Panc1 (cell line): ENCODE measurements at regions of chr12 and their contacts with region 1.

Region 1: GRCh38 chr12:121334513-121335343 is 17.5 kb downstream of the ANAPC5 start:
- DNase-seq: no peak
- ATAC-seq: peak; percentile 95
- H3K4me3 ChIP-seq: no peak overlapping the region
- H3K27ac ChIP-seq: no peak overlapping the region
- H3K4me1 ChIP-seq: no peaks in the 10 kb centered on the region
- H3K27me3 ChIP-seq: no peaks in the 10 kb centered on the region
- CTCF ChIP-seq: peak; percentile 85

Region 2: GRCh38 chr12:120725659-120726509 is 608.8 kb before region 1 on chr12 and contains the start of gene ACADS:
- CTCF ChIA-PET with region 1: no interaction called
- POLR2A ChIA-PET with region 1: no interaction called
- in situ Hi-C with region 1: no loop called
- intact Hi-C with region 1: no loop called
- DNase-seq: peak; percentile 22
- ATAC-seq: peak; percentile 99
- H3K4me3 ChIP-seq: peak within 1 kb of the TSS; percentile 71 to 82
- H3K27ac ChIP-seq: peak within 1 kb of the TSS; percentile 90
- H3K4me1 ChIP-seq: peaks cover 8% of the 10 kb centered on the region
- H3K27me3 ChIP-seq: no peaks in the 10 kb centered on the region
- CTCF ChIP-seq: no peak
- total RNA-seq, gene ACADS: 15.9 TPM

Region 3: GRCh38 chr12:120978296-120979219 is 356.2 kb before region 1 on chr12 and contains the start of gene HNF1A:
- CTCF ChIA-PET with region 1: no interaction called
- POLR2A ChIA-PET with region 1: interaction called, 11 read pairs
- in situ Hi-C with region 1: no loop called
- intact Hi-C with region 1: no loop called
- DNase-seq: no peak
- ATAC-seq: peak; percentile 80
- H3K4me3 ChIP-seq: no peak within 1 kb of the TSS
- H3K27ac ChIP-seq: no peak within 1 kb of the TSS
- H3K4me1 ChIP-seq: peaks cover 14% of the 10 kb centered on the region
- H3K27me3 ChIP-seq: no peaks in the 10 kb centered on the region
- CTCF ChIP-seq: no peak
- total RNA-seq, gene HNF1A: 0.26 TPM

Region 4: GRCh38 chr12:121413917-121414316 is 79.2 kb after region 1 on chr12:
- CTCF ChIA-PET with region 1: no interaction called
- POLR2A ChIA-PET with region 1: no interaction called
- in situ Hi-C with region 1: no loop called
- intact Hi-C with region 1: no loop called
- DNase-seq: no peak
- ATAC-seq: no peak
- H3K4me3 ChIP-seq: no peak overlapping the region
- H3K27ac ChIP-seq: no peak overlapping the region
- H3K4me1 ChIP-seq: no peaks in the 10 kb centered on the region
- H3K27me3 ChIP-seq: no peaks in the 10 kb centered on the region
- CTCF ChIP-seq: no peak

Region 5: GRCh38 chr12:121443193-121443870 is 108.6 kb after region 1 on chr12:
- CTCF ChIA-PET with region 1: interaction called, 11 read pairs
- POLR2A ChIA-PET with region 1: no interaction called
- in situ Hi-C with region 1: no loop called
- intact Hi-C with region 1: loop called (anchors 5 kb)
- DNase-seq: peak; percentile 32
- ATAC-seq: peak; percentile 98
- H3K4me3 ChIP-seq: no peak overlapping the region
- H3K27ac ChIP-seq: no peak overlapping the region
- H3K4me1 ChIP-seq: peaks cover 4% of the 10 kb centered on the region; the same call in 1 of the 2 replicates
- H3K27me3 ChIP-seq: no peaks in the 10 kb centered on the region
- CTCF ChIP-seq: peak; percentile 97

Region 6: GRCh38 chr12:121903202-121903601 is 568.5 kb after region 1 on chr12:
- CTCF ChIA-PET with region 1: no interaction called
- POLR2A ChIA-PET with region 1: no interaction called
- in situ Hi-C with region 1: no loop called
- intact Hi-C with region 1: no loop called
- DNase-seq: no peak
- ATAC-seq: peak; percentile 69; the same call in 1 of the 2 replicates
- H3K4me3 ChIP-seq: no peak overlapping the region
- H3K27ac ChIP-seq: no peak overlapping the region
- H3K4me1 ChIP-seq: no peaks in the 10 kb centered on the region
- H3K27me3 ChIP-seq: no peaks in the 10 kb centered on the region
- CTCF ChIP-seq: no peak